ENCODE measurements at regions of chr19 and their contacts with region 1.

Region 1: GRCh38 chr19:8697671-8698432 is 743 bp downstream of the ACTL9 start:
- DNase-seq: no peak

Region 2: GRCh38 chr19:7919610-7920518 is 778.0 kb before region 1 on chr19 and contains the start of gene SNAPC2:
- intact Hi-C with region 1: no loop called
- DNase-seq: peak; percentile 99
- total RNA-seq, gene SNAPC2: 25.4 to 28.7 TPM

Region 3: DNA sequence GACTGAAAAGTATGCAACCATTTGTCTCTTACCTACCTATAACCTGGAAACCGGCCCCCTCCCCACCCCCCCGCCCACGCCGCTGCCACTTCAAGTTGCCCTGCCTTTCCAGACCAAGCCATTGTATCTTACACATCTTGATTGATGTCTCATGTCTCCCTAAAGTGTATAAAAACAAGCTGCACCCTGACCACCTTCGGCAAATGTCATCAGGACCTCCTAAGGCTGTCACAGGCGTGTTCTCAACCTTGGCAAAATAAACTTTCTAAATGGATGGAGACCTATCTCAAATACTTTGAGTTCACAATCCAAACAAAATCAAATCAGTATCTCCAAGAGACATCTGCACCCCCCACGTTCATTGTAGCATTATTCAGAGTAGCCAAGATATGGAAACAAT is 306.3 kb after region 1 on chr19:
- intact Hi-C with region 1: no loop called
- DNase-seq: no peak

Region 4: GRCh38 chr19:9547870-9548269 is 850.0 kb after region 1 on chr19:
- intact Hi-C with region 1: loop called in 1 of 2 experiments (anchors 5 kb)
- DNase-seq: no peak